ENCODE measurements at regions of chr11 and their contacts with region 1.

Region 1: DNA sequence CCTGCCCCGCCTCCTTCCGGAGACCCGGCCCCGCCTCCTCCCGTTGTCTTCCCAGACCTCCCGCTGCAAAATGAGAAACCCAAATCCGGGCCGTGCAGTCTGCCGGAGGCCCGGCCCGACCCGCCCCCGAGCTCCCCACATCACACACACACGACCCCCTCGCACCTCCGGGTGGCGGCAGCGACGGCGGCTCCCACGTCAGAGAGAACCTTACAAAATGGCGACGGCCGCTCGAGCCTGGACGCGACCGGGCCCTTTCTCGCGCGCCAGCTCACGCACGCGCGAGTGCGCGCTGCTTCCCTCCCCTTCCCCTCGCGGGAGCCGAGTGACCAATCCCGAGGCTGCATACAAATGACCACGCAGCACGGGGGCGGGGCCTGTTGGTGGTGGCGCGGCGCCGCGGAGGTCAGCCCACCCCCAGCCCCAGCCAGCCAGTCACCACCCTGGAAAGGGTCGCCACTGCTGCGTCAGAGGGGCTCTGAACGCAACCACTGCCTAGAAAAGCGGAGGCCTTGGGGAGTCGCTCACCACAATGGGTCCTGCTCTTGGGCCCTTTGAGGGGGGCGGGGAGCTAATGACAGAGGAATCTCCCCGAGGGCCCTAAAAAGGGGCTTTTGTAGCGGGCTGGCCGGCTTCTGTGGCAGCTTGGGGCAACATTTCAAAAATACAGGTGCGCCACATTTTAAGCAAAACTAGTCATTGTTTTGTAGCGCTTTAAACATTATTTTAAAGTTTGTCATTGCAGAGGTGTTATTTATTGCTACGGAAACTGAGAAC is at the start of gene RBM4B:
- DNase-seq: peak; percentile 100
- H3K4me3 ChIP-seq: peak within 1 kb of the TSS; percentile 71
- H3K4me3 Mint-ChIP-seq: peak within 1 kb of the TSS; percentile 94
- H3K27ac Mint-ChIP-seq: peak within 1 kb of the TSS; percentile 98
- H3K4me1 ChIP-seq: peaks cover 21% of the 10 kb centered on the region
- H3K4me1 Mint-ChIP-seq: peaks cover 16% of the 10 kb centered on the region
- H3K27me3 ChIP-seq: no peaks in the 10 kb centered on the region
- H3K27me3 Mint-ChIP-seq: no peaks in the 10 kb centered on the region
- CTCF ChIP-seq: no peak
- total RNA-seq, gene RBM4B: 39.8 and 45.8 TPM in 2 replicates

Region 2: DNA sequence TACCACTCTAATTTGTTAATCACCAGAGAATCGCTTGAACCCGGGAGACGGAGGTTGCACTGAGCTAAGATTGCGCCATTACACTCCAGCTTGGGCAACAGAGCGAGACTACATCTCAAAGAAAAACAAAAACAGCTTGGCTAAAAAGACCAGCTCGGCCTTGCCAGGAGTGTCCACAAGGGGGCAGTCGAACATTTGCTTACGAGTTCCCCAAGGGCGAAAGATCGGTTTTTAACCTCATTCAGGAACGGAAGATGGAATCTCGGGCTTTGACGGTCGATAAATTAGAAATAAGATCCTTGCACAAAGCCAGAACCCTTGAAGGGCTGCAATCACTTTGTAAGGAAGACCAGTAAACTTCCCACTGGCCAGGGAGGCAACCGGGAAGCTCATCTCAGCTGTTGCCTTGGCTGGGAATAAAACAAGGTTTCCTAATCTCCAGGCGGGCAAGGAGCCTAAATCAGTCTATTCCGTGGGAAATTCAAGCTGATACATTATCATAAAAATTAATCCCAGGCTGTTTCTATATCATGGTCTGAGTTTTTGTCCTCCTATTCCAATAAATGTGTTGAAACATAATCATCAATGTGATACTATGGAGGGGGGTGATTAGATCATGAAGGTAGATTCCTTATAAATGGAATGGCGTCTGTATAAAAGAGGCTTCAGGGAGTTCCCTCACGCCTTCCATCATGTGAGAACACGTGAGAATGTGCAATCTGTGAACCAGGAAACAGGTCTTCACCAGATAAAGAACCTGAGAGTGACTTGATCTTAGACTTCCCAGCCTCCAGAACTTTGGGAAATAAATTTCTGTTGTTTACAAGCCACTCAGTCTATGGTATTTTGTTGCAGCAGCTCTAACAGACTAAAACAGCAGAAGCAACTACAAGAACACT is 291.4 kb before region 1 on chr11:
- CTCF ChIA-PET with region 1: interaction called, 10 read pairs
- POLR2A ChIA-PET with region 1: interaction called, 6 read pairs
- intact Hi-C with region 1: no loop called
- DNase-seq: peak; percentile 85 to 86
- H3K4me3 ChIP-seq: no peak overlapping the region
- H3K4me3 Mint-ChIP-seq: peak overlapping the region; percentile 61
- H3K27ac Mint-ChIP-seq: no peak overlapping the region
- H3K4me1 ChIP-seq: no peaks in the 10 kb centered on the region
- H3K4me1 Mint-ChIP-seq: no peaks in the 10 kb centered on the region
- H3K27me3 ChIP-seq: no peaks in the 10 kb centered on the region
- H3K27me3 Mint-ChIP-seq: peaks cover 5% of the 10 kb centered on the region
- CTCF ChIP-seq: peak; percentile 86 to 94

Region 3: DNA sequence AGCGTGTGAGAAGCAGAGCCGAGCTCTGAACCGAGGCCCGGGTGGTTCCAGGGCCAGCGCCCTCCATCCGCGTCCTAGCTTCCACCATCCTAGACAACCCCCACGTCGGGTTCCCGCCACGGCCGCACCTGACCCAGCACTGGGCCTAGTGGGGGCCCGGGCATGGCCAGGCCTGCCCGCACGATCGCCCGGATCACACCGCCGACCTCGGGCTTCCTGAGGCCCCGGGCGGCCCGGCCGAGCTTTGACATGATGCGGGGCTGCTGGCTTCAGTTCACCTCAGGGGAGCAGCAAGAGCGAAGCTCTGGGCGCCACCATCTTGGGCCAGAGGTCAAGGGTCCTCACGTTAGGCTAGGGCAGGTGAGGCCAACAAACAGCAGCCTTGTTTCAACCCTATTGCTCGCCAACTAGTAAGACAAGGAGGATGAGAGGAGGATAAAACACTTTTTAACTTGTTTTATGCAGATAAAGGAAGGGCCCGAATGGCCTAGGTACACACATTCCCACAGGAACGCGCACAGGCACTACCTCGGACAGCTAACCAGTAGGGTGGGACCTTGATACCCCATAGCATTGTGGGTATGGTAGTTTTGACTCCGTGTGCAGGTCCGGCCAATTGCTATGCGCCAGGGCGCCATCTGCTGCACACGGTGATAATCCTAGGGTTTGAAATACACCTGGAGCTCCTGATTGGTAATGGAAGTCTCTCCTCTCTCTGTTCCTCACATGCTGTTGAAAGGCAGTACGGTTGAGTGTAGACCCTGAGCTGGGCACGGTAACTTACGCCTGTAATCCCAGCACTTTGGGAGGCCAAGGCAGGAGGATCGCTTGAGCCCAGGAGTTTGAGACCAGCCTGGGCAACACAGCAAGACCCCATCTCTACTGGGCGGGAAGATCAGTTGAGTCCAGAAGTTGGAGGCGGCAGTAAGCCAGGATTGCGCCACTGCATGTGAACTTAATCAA is 239.0 kb before region 1 on chr11 and contains the start of gene MRPL11:
- CTCF ChIA-PET with region 1: interaction called, 43 read pairs
- POLR2A ChIA-PET with region 1: interaction called, 12 read pairs
- intact Hi-C with region 1: no loop called
- DNase-seq: peak; percentile 97 to 98
- H3K4me3 ChIP-seq: peak within 1 kb of the TSS; percentile 81
- H3K4me3 Mint-ChIP-seq: peak within 1 kb of the TSS; percentile 100
- H3K27ac Mint-ChIP-seq: peak within 1 kb of the TSS; percentile 100
- H3K4me1 ChIP-seq: peaks cover 17% of the 10 kb centered on the region
- H3K4me1 Mint-ChIP-seq: peaks cover 27% of the 10 kb centered on the region
- H3K27me3 ChIP-seq: no peaks in the 10 kb centered on the region
- H3K27me3 Mint-ChIP-seq: no peaks in the 10 kb centered on the region
- CTCF ChIP-seq: peak; percentile 79 to 96
- total RNA-seq, gene MRPL11: 201 and 206 TPM in 2 replicates

Region 4: GRCh38 chr11:66491315-66491935 is 186.4 kb before region 1 on chr11:
- CTCF ChIA-PET with region 1: interaction called, 22 read pairs
- POLR2A ChIA-PET with region 1: no interaction called
- intact Hi-C with region 1: loop called (anchors 1 kb)
- DNase-seq: peak in 1 of 2 experiments; percentile 64
- H3K4me3 ChIP-seq: no peak overlapping the region
- H3K4me3 Mint-ChIP-seq: no peak overlapping the region
- H3K27ac Mint-ChIP-seq: no peak overlapping the region
- H3K4me1 ChIP-seq: peaks cover 14% of the 10 kb centered on the region; the same call in 1 of the 2 replicates
- H3K4me1 Mint-ChIP-seq: no peaks in the 10 kb centered on the region
- H3K27me3 ChIP-seq: no peaks in the 10 kb centered on the region
- H3K27me3 Mint-ChIP-seq: no peaks in the 10 kb centered on the region
- CTCF ChIP-seq: peak; percentile 77 to 92

Region 5: DNA sequence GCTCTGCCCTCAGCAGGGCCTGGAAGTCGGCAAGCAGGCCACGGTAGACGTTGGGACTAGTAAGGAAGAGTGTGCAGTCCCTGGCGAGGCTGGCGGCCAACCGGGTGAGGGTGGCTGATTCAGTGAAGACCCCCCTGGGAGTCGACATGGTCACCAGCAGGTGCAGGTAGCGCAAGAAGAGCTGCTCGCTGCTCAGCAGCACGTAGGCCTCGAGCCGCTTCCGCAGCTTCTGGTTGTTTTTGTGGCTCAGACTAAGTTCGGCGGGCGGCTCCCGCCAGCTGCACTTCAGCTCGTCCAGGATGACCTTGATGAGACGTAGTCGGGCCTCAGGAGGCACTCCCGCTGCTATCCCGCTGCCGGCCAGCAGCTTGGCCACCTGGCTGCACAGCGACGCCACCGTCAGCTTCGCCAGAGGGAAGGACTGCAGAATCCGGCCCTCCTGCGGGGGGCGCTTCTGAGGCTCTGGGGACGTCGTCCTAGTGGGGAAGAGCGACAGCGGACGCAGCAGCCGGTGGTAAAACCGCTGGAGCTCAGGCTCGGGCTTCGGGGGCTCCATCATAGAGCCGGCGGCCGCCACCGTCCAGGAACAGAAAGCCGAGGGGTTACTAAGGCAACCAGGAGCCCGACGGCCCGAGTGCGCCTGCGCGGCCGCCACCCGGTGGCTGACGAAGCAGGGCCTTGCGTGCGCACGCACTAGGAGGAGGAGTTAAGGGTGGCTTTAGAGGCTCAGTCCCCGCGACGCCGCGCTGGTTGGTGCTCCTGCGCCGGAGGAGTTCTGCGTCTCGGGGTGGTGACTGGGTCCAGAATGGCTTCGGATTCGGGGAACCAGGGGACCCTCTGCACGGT is 85.1 kb before region 1 on chr11 and contains the starts of genes CCDC87 and CCS:
- CTCF ChIA-PET with region 1: interaction called, 14 read pairs
- POLR2A ChIA-PET with region 1: interaction called, 9 read pairs
- intact Hi-C with region 1: loop called (anchors 1 kb)
- DNase-seq: peak; percentile 99 to 100
- H3K4me3 ChIP-seq: peak within 1 kb of the TSS; percentile 68
- H3K4me3 Mint-ChIP-seq: peak within 1 kb of the TSS; percentile 79
- H3K27ac Mint-ChIP-seq: peak within 1 kb of the TSS; percentile 90
- H3K4me1 ChIP-seq: peaks cover 23% of the 10 kb centered on the region
- H3K4me1 Mint-ChIP-seq: peaks cover 6% of the 10 kb centered on the region
- H3K27me3 ChIP-seq: no peaks in the 10 kb centered on the region
- H3K27me3 Mint-ChIP-seq: no peaks in the 10 kb centered on the region
- CTCF ChIP-seq: peak; percentile 93 to 99
- total RNA-seq, gene CCDC87: 1.0 TPM in 2 replicates
- total RNA-seq, gene CCS: 52.9 and 54.0 TPM in 2 replicates

Region 6: GRCh38 chr11:66646828-66647227 is 31.0 kb before region 1 on chr11:
- CTCF ChIA-PET with region 1: no interaction called
- POLR2A ChIA-PET with region 1: interaction called, 13 read pairs
- intact Hi-C with region 1: no loop called
- DNase-seq: no peak
- H3K4me3 ChIP-seq: no peak overlapping the region
- H3K4me3 Mint-ChIP-seq: no peak overlapping the region
- H3K27ac Mint-ChIP-seq: no peak overlapping the region
- H3K4me1 ChIP-seq: peaks cover under 1% of the 10 kb centered on the region; the same call in 1 of the 2 replicates
- H3K4me1 Mint-ChIP-seq: peaks cover 34% of the 10 kb centered on the region
- H3K27me3 ChIP-seq: no peaks in the 10 kb centered on the region
- H3K27me3 Mint-ChIP-seq: no peaks in the 10 kb centered on the region
- CTCF ChIP-seq: no peak

Region 7: DNA sequence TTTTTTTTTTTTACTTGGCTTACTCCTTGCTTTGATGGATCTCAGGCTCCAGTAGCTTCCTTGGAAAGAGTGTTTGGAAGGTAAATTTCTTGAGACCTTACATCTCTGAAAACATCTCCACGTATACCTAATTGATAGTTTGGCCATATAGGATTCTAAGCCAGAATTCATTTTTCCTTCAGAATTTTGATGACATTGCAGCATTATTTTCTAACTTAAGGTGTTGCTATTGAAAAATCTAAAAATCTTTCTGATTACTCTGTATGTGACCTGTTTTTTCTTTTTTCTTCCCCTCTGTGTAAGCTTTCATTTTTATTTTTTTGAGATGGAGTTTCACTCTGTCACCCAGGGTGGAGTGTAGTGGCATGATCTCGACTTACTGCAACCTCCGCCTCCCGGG is 74.4 kb after region 1 on chr11:
- CTCF ChIA-PET with region 1: no interaction called
- POLR2A ChIA-PET with region 1: no interaction called
- intact Hi-C with region 1: no loop called
- DNase-seq: no peak
- H3K4me3 ChIP-seq: no peak overlapping the region
- H3K4me3 Mint-ChIP-seq: no peak overlapping the region
- H3K27ac Mint-ChIP-seq: no peak overlapping the region
- H3K4me1 ChIP-seq: 0 out of 2 replicates have a peak, but pooled peaks cover 4% of the 10 kb centered on the region
- H3K4me1 Mint-ChIP-seq: peaks cover 20% of the 10 kb centered on the region
- H3K27me3 ChIP-seq: no peaks in the 10 kb centered on the region
- H3K27me3 Mint-ChIP-seq: no peaks in the 10 kb centered on the region
- CTCF ChIP-seq: no peak

Region 8: DNA sequence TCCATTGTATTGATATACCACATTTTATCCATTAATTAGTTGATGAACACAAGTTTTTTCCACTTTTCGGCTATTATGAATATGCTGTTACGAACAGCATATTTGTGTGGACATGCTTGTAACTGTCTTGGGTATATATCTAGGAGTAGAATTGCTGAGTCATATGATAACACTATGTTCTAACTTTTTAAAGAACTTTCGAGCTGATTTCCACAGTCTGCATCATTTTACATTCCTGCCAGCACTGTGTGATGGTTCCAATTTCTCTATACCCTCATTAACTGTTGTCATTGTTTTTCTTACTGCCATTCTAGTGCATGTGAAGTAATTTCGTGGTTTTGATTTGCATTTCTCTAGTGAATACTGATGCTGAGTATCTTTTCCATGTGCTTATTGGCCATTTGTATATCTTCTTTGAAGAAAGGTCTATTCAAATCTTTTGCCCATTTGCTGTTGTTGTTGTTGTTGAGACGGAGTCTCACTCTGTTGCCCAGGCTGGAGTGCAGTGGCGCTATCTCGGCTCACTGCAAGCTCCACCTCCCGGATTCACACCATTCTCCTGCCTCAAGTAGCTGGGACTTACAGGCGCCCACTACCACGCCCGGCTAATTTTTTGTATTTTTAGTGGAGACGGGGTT is 158.1 kb after region 1 on chr11:
- CTCF ChIA-PET with region 1: interaction called, 7 read pairs
- POLR2A ChIA-PET with region 1: no interaction called
- intact Hi-C with region 1: loop called (anchors 5 kb)
- DNase-seq: no peak
- H3K4me3 ChIP-seq: no peak overlapping the region
- H3K4me3 Mint-ChIP-seq: no peak overlapping the region
- H3K27ac Mint-ChIP-seq: no peak overlapping the region
- H3K4me1 ChIP-seq: no peaks in the 10 kb centered on the region; the same call in 1 of the 2 replicates
- H3K4me1 Mint-ChIP-seq: peaks cover 13% of the 10 kb centered on the region
- H3K27me3 ChIP-seq: no peaks in the 10 kb centered on the region
- H3K27me3 Mint-ChIP-seq: no peaks in the 10 kb centered on the region
- CTCF ChIP-seq: no peak